ENCODE measurements at regions of chr6 and their contacts with region 1.

Region 1: DNA sequence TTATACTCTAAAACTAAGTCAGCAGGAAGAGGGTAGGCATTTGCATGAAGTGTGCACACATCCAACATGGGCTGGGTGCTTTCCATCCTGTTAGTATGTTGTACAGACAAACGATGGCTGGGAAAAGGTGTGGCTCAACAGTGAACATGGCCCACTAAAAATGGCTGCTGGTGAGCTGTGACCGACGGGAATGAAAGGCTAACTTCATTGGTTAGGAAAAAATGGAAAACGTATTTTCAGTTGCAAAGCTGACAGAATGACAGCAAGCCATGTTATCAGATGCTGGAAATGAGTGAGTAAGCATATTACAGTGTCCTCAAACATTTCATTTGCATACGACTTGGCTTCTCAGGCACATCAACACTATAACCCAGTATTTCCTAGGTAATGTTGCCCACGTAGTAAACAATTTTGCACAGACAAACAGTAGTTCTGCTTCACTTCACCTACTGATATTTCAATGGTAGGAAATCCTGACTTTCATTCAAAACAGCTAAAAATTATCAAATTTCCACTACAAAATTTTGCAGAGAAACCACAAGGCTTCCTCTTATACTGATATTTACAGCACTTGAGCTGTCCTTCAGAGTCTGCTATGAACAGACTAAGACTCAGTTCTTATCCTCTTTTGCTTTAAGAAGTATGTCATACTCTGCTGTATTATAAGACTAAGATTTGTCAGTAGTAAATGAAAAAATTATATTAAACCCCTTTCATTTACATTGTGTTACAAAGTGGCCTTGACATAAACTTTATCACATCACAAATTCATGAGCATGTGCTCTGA is 98.9 kb downstream of the IRF4 start:
- DNase-seq: peak; percentile 76
- H3K4me3 Mint-ChIP-seq: peak overlapping the region; percentile 62
- H3K27ac Mint-ChIP-seq: peak overlapping the region; percentile 100
- H3K4me1 Mint-ChIP-seq: peaks cover 92% of the 10 kb centered on the region
- H3K27me3 Mint-ChIP-seq: no peaks in the 10 kb centered on the region

Region 2: GRCh38 chr6:399785-400534 is 90.5 kb before region 1 on chr6:
- CTCF ChIA-PET with region 1: no interaction called
- POLR2A ChIA-PET with region 1: interaction called, 136 read pairs
- intact Hi-C with region 1: loop called (anchors 2 kb)
- DNase-seq: peak; percentile 76
- H3K4me3 Mint-ChIP-seq: peak overlapping the region; percentile 64
- H3K27ac Mint-ChIP-seq: peak overlapping the region; percentile 88
- H3K4me1 Mint-ChIP-seq: peaks cover 94% of the 10 kb centered on the region
- H3K27me3 Mint-ChIP-seq: no peaks in the 10 kb centered on the region

Region 3: DNA sequence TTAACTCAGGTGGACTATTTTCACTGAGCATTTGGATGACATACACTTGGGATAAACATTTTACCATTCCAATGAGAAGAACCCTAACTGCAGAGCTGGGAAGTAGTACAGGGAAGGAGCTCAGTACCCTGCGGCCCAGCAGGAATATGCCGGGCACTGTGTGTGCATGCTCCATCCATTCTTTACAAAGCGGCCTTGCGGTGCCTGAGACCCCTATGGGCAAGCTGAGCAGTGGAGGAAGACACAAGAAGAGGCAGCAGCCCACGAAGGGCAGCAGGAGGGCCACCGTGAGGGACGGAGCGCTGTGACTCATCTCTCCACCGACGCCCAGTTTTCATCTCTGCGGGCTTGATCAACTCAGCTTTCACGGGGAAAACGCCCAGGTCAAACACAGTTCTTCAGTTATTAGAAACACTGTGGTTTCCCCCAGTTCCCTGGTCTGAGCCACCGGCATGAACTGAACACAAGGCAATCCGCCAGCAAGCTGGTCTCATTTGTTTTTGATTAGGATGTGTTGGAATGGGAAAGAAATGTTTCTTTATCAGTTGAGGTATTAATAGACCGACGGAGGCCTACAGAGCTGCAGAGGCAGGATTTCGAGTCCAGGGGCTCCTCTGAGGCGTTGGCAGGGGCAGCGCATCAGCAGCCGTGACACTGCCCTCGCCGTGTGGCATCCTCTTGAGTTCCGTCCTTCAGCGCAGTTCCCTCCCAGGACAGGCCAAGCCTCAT is 54.0 kb before region 1 on chr6:
- CTCF ChIA-PET with region 1: interaction called, 4 read pairs
- POLR2A ChIA-PET with region 1: interaction called, 11 read pairs
- intact Hi-C with region 1: loop called (anchors 1 kb)
- DNase-seq: no peak
- H3K4me3 Mint-ChIP-seq: no peak overlapping the region
- H3K27ac Mint-ChIP-seq: no peak overlapping the region
- H3K4me1 Mint-ChIP-seq: peaks cover 43% of the 10 kb centered on the region
- H3K27me3 Mint-ChIP-seq: no peaks in the 10 kb centered on the region

Region 4: GRCh38 chr6:474453-475185 is 15.8 kb before region 1 on chr6:
- CTCF ChIA-PET with region 1: interaction called, 4 read pairs
- POLR2A ChIA-PET with region 1: interaction called, 18 read pairs
- intact Hi-C with region 1: loop called (anchors 1 kb)
- DNase-seq: peak; percentile 92
- H3K4me3 Mint-ChIP-seq: peak overlapping the region; percentile 44
- H3K27ac Mint-ChIP-seq: peak overlapping the region; percentile 83
- H3K4me1 Mint-ChIP-seq: peaks cover 74% of the 10 kb centered on the region
- H3K27me3 Mint-ChIP-seq: peaks cover 4% of the 10 kb centered on the region

Region 5: DNA sequence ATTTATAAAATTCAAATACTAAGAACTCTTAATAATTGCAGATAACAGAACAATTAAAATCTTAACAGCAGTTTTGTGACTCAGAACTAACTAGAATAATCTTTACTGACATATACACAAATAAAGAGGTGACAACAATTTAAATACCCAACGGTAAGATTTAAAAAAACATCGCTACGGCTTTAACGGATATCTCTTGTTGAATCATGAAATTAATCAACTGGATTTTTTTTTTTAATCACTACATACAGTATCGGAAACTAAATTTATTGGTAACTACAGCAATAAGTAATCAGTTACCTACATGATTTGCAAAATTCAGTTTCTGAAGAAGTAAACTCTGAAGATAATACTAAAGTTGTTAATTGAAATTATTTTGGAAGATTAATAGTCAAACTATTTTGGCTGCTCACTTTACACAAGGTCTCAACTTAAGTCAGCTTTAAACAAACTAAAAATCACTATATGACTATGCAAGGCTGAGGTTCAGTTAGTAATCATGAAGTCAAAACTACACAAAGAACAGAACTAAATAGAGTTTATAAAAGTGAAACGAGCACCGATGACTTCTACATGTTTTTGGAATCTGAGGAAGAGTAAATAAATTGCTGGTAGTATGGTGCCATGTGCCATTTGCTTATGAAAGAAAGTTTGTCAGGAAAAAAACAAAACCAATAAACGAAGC is 37.7 kb after region 1 on chr6:
- CTCF ChIA-PET with region 1: no interaction called
- POLR2A ChIA-PET with region 1: interaction called, 4 read pairs
- intact Hi-C with region 1: loop called (anchors 1 kb)
- DNase-seq: no peak
- H3K4me3 Mint-ChIP-seq: peak overlapping the region; percentile 16
- H3K27ac Mint-ChIP-seq: peak overlapping the region; percentile 87
- H3K4me1 Mint-ChIP-seq: peaks cover 30% of the 10 kb centered on the region
- H3K27me3 Mint-ChIP-seq: no peaks in the 10 kb centered on the region

Region 6: GRCh38 chr6:558089-558488 is 67.6 kb after region 1 on chr6:
- CTCF ChIA-PET with region 1: interaction called, 4 read pairs
- POLR2A ChIA-PET with region 1: interaction called, 3 read pairs
- intact Hi-C with region 1: loop called (anchors 2 kb)
- DNase-seq: no peak
- H3K4me3 Mint-ChIP-seq: no peak overlapping the region
- H3K27ac Mint-ChIP-seq: peak overlapping the region; percentile 87
- H3K4me1 Mint-ChIP-seq: peaks cover 60% of the 10 kb centered on the region
- H3K27me3 Mint-ChIP-seq: no peaks in the 10 kb centered on the region

Region 7: GRCh38 chr6:1039191-1039590 is 548.7 kb after region 1 on chr6:
- CTCF ChIA-PET with region 1: no interaction called
- POLR2A ChIA-PET with region 1: no interaction called
- intact Hi-C with region 1: no loop called
- DNase-seq: no peak
- H3K4me3 Mint-ChIP-seq: no peak overlapping the region
- H3K27ac Mint-ChIP-seq: no peak overlapping the region
- H3K4me1 Mint-ChIP-seq: no peaks in the 10 kb centered on the region
- H3K27me3 Mint-ChIP-seq: peaks cover 14% of the 10 kb centered on the region